IMR-90 (cell line): ENCODE measurements at regions of chr10 and their contacts with region 1.

Region 1: GRCh38 chr10:35212856-35213255 is 86.2 kb downstream of the CREM start:
- DNase-seq: no peak
- ATAC-seq: no peak
- H3K4me3 ChIP-seq: no peak overlapping the region
- H3K27ac ChIP-seq: no peak overlapping the region
- H3K4me1 ChIP-seq: peaks cover 2% of the 10 kb centered on the region
- H3K27me3 ChIP-seq: no peaks in the 10 kb centered on the region
- CTCF ChIP-seq: no peak
- POLR2A ChIP-seq: no peak
- RAD21 ChIP-seq: no peak

Region 2: GRCh38 chr10:34655286-34656170 is 557.3 kb before region 1 on chr10:
- CTCF ChIA-PET with region 1: no interaction called
- POLR2A ChIA-PET with region 1: no interaction called
- dilution Hi-C with region 1: no loop called
- in situ Hi-C with region 1: no loop called
- intact Hi-C with region 1: loop called (anchors 5 kb)
- DNase-seq: peak; percentile 75
- ATAC-seq: peak; percentile 79
- H3K4me3 ChIP-seq: no peak overlapping the region
- H3K27ac ChIP-seq: no peak overlapping the region
- H3K4me1 ChIP-seq: peaks cover 5% of the 10 kb centered on the region
- H3K27me3 ChIP-seq: no peaks in the 10 kb centered on the region
- CTCF ChIP-seq: peak; percentile 66
- POLR2A ChIP-seq: no peak
- RAD21 ChIP-seq: peak; percentile 65